Heart left ventricle (tissue), 16 donors: ENCODE measurements at regions of chr20 and their contacts with region 1.

Region 1: DNA sequence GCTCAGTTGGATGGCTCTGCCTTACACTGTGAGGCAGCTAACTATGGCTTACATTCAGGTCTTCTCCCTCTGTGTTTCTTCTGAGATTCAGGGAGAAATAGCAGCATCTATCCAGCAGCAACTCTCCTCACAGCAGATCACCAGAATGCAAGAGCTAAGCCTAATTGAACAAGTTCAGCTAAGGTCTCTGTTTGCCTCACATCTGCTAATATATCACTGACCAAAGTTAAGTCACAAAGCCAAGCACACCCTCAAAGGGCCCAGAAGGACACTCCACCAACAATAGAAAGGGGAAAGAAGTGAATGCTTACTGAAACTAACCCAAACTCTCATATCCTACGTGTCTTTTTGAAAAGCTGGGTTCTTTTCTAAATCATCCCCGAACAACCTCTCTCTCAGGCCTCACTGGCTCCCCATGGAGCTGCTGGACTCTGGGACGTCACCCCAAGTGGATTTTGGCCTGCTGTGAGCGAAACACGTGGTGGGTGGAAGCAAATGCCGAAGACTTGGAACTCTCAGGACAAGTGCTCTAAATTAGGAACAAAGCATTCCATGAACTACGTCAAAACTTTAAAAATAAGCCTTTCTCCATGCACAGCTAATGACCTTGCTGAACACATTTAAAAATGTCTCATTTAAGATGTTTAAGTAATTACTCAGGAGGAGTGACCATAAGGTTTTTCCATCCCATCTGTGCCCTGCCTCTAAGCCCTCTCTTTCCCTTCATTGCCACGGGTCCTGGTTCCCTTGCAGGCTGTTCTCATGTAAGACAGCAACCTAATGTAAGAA is 167.5 kb upstream of the PLCB4 start:
- DNase-seq: peak; percentile 63 to 83 (median 76)
- ATAC-seq: peak; percentile 87 to 97 (median 95)
- H3K4me3 ChIP-seq: no peak overlapping the region
- H3K27ac ChIP-seq: peak overlapping the region; percentile 23 to 88 (median 62)
- H3K4me1 ChIP-seq: peaks cover 0 to 24% (median 13%) of the 10 kb centered on the region in 12 donors
- H3K27me3 ChIP-seq: no peaks in the 10 kb centered on the region
- CTCF ChIP-seq: no peak
- POLR2A ChIP-seq: no peak

Region 2: GRCh38 chr20:8867181-8867740 is 34.2 kb before region 1 on chr20:
- intact Hi-C with region 1: loop called in 1 of 10 experiments (anchors 5 kb)
- DNase-seq: no peak
- ATAC-seq: no peak
- H3K4me3 ChIP-seq: no peak overlapping the region
- H3K27ac ChIP-seq: peak overlapping the region in 1 of 12 donors; percentile 36
- H3K4me1 ChIP-seq: peaks cover 0 to 12% (median 0%) of the 10 kb centered on the region in 12 donors
- H3K27me3 ChIP-seq: no peaks in the 10 kb centered on the region
- CTCF ChIP-seq: no peak
- POLR2A ChIP-seq: no peak